Activated CD4-positive, alpha-beta memory T cell treated with anti-CD3 and anti-CD28 coated beads for 36 hours (primary cell): ENCODE measurements at regions of chr15 and their contacts with region 1.

Region 1: DNA sequence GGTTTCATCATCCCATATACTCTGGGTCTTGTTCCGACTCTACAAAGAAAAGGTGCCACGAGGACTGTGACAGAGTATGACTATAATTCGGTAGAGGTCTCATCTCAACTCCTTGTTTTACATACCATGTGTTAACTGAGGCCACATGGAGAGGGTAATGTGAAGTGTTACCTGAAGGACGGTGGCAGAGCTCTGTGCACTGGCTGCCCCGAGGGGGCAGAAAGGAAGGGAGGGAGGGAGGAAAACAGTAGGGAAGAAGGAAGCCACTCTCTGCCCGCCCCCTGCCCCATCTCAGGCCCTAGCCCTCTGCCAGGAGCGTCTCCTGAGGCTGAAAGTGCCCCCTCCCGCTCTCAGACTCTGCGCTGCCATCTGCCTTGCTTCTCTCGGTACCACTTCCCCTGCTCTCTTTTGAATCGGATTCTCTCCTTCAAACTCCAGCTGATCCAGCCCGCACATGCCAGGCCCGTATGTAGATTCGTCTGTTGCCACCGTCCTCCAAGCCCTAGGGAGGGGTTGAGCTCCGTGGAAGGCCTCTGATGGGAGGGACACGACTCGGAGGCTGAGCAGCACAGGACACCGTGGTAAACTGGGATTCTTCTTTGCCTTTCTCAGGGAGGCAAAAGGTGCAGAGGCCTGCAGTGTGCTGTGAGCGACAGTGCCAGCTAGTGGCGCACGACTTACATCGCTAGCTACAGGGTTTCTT is 70.5 kb upstream of the ATP10A start:
- DNase-seq: peak; percentile 83
- H3K4me3 Mint-ChIP-seq: peak overlapping the region; percentile 81
- H3K27ac Mint-ChIP-seq: no peak overlapping the region
- H3K4me1 Mint-ChIP-seq: peaks cover 7% of the 10 kb centered on the region
- H3K27me3 Mint-ChIP-seq: peaks cover 5% of the 10 kb centered on the region

Region 2: DNA sequence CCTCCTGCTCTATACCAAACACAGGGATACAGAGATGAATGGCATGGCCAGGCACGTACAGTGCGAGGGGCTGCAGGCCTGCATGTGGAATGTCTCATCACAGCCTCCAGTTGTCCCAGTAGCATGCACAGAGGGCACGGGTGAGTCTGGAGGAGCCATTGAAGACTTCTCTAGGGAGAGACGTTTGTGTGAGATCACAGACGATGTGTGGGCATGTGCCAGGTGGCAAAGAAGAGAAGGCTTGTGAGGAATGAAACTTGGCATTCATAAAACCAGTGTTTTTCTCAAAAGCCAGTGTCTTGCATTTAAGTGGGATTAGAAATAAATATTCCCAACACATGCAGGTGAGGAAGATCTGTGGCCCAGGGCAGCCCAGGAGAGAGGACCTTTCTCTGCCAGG is 375.7 kb before region 1 on chr15:
- CTCF ChIA-PET with region 1: no interaction called
- POLR2A ChIA-PET with region 1: no interaction called
- intact Hi-C with region 1: no loop called
- DNase-seq: no peak
- H3K4me3 Mint-ChIP-seq: no peak overlapping the region
- H3K27ac Mint-ChIP-seq: no peak overlapping the region
- H3K4me1 Mint-ChIP-seq: no peaks in the 10 kb centered on the region
- H3K27me3 Mint-ChIP-seq: no peaks in the 10 kb centered on the region

Region 3: DNA sequence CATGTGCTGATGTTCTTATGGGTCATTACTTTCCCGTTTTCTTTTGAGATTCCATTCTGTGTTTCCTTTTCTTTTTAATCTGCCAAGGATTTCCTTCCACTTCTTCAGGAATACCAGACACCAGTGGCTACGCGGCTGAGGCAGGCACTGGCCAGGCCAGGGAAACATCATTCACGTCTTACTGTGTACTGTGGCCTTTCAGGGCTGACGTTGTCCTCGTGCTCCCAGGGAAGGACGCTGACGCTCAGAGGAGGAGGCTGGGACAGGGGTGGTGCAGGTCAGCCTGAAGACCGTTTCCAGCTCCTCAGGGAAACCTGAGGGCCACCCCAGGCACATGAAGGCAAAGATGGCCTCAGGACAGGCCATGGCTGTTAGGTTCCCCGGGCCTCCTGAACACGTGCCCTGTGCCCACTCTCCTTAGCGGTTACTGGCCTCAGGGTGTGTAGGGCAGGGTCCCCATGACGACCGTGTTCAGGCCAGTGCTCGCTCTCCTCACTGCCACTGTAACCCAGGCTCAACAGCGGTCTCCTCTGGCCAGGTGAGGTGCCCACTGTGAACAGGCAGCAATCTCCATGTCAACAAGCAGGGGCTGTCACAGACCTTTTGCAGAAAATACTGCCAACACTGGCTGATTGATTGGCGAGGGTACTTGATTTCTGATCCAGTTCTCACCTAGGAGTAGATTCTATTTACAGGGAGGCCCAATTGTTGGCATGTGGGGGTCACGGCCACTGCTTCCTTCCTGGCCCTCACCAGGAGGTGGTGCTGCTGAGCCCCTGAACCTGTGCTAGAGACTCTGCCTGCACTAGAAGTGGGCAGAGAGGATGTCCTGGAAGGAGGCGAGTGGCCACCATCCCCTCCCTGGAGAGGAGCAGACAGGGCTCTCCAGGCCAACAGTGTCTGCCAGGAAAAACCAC is 240.0 kb before region 1 on chr15:
- CTCF ChIA-PET with region 1: interaction called, 13 read pairs
- POLR2A ChIA-PET with region 1: no interaction called
- intact Hi-C with region 1: loop called (anchors 1 kb)
- DNase-seq: peak; percentile 49
- H3K4me3 Mint-ChIP-seq: no peak overlapping the region
- H3K27ac Mint-ChIP-seq: no peak overlapping the region
- H3K4me1 Mint-ChIP-seq: no peaks in the 10 kb centered on the region
- H3K27me3 Mint-ChIP-seq: no peaks in the 10 kb centered on the region

Region 4: DNA sequence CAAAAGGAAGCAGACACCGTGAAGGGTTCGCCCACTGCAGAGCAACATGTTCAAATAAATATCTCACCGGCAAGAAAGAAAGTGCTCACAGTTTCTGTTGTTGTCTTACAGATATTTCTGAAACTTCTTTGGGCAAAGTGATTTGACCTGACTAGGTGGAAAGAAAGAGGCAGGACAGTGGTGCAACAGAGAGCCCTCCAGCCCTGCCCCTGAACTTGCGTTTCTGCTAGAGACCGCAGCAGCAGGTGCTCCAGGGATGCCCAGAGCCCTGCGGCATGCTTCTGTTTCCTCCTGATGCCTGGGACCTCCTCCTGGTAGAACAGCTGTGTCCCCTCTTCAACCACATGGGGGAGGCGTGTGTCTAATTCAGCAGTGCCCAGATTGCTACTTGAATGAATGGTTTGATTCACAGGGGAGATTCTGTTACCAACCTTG is 193.9 kb before region 1 on chr15:
- CTCF ChIA-PET with region 1: interaction called, 7 read pairs
- POLR2A ChIA-PET with region 1: no interaction called
- intact Hi-C with region 1: loop called (anchors 1 kb)
- DNase-seq: peak; percentile 55
- H3K4me3 Mint-ChIP-seq: no peak overlapping the region
- H3K27ac Mint-ChIP-seq: no peak overlapping the region
- H3K4me1 Mint-ChIP-seq: peaks cover 17% of the 10 kb centered on the region
- H3K27me3 Mint-ChIP-seq: no peaks in the 10 kb centered on the region

Region 5: GRCh38 chr15:25790000-25790660 is 143.5 kb before region 1 on chr15:
- CTCF ChIA-PET with region 1: interaction called, 8 read pairs
- POLR2A ChIA-PET with region 1: no interaction called
- intact Hi-C with region 1: loop called (anchors 5 kb)
- DNase-seq: peak; percentile 75
- H3K4me3 Mint-ChIP-seq: peak overlapping the region; percentile 25
- H3K27ac Mint-ChIP-seq: peak overlapping the region; percentile 84
- H3K4me1 Mint-ChIP-seq: peaks cover 58% of the 10 kb centered on the region
- H3K27me3 Mint-ChIP-seq: no peaks in the 10 kb centered on the region